Activated naive CD8-positive, alpha-beta T cell treated with anti-CD3 and anti-CD28 coated beads, Interleukin-2, amount 10 ng/mL, durations not matched to agents 7 days and 5 days (primary cell): ENCODE measurements at regions of chr12 and their contacts with region 1.

Region 1: DNA sequence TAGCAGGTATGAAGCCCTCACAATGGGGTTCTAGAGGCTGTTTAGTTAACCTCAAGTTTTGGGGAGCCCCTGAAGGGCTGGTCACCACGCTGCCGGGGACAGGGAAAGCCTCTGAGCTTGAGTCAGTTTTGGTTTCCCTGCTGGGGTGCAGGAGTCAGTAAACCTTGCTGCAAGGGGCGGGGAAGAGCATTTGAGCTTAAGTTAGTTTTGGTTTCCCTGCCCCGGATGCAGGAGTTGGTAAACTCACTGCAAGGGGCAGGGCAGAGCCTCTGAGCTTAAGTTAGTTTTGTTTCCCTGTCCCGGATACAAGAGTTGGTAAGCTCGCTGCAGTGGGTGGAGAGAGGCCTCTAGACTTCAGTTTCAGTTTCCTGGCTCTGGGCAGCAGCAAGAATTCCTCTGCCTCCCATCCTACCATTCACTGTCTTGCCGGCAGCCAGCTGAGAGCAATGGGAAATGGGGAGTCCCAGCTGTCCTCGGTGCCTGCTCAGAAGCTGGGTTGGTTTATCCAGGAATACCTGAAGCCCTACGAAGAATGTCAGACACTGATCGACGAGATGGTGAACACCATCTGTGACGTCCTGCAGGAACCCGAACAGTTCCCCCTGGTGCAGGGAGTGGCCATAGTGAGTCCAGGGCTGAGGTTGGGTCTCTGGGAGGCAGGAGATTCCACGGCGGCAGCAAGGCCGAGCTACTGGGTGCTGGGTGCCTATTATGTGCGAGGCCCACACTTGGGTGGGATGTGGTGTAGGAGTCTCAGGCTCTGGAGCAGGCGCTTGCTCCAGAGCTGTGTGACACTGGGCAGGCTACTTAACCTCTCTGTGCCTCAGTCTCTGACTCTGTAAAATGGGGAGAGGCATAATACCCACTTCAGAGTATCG is at the start of gene OAS2:
- DNase-seq: peak; percentile 74
- ATAC-seq: peak; percentile 94
- H3K4me3 Mint-ChIP-seq: peak within 1 kb of the TSS; percentile 88
- H3K27ac Mint-ChIP-seq: peak within 1 kb of the TSS; percentile 100
- H3K4me1 Mint-ChIP-seq: peaks cover 41% of the 10 kb centered on the region
- H3K27me3 Mint-ChIP-seq: no peaks in the 10 kb centered on the region
- total RNA-seq, gene OAS2: 244 to 245 TPM

Region 2: GRCh38 chr12:112900299-112901145 is 77.9 kb before region 1 on chr12:
- POLR2A ChIA-PET with region 1: interaction called, 187 read pairs
- DNase-seq: no peak
- ATAC-seq: peak; percentile 35
- H3K4me3 Mint-ChIP-seq: no peak overlapping the region
- H3K27ac Mint-ChIP-seq: peak overlapping the region; percentile 67
- H3K4me1 Mint-ChIP-seq: peaks cover 23% of the 10 kb centered on the region
- H3K27me3 Mint-ChIP-seq: peaks cover 19% of the 10 kb centered on the region

Region 3: DNA sequence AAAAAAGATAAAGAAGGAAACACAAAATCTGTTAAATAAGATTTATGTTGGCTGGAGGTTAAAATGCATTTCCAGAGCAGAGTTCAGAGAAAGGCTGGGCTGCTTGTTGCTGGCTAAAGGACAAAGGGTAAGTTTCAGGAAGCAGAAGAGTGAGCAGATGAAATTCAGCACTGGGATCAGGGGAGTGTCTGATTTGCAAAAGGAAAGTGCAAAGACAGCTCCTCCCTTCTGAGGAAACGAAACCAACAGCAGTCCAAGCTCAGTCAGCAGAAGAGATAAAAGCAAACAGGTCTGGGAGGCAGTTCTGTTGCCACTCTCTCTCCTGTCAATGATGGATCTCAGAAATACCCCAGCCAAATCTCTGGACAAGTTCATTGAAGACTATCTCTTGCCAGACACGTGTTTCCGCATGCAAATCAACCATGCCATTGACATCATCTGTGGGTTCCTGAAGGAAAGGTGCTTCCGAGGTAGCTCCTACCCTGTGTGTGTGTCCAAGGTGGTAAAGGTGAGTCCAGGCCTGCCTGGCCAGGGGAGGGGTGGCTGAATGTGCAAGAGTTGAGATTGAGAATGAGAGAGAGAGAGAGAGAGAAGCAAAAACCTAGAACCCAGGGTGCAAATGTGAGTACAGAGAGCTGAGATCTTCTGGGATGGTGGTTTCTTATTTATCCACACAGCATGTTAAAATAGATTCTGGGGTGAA is 71.5 kb before region 1 on chr12 and contains the start of gene OAS1:
- POLR2A ChIA-PET with region 1: interaction called, 187 read pairs
- DNase-seq: peak; percentile 46
- ATAC-seq: peak; percentile 88
- H3K4me3 Mint-ChIP-seq: peak within 1 kb of the TSS; percentile 98
- H3K27ac Mint-ChIP-seq: peak within 1 kb of the TSS; percentile 99
- H3K4me1 Mint-ChIP-seq: peaks cover 56% of the 10 kb centered on the region
- H3K27me3 Mint-ChIP-seq: no peaks in the 10 kb centered on the region
- total RNA-seq, gene OAS1: 138 to 141 TPM

Region 4: DNA sequence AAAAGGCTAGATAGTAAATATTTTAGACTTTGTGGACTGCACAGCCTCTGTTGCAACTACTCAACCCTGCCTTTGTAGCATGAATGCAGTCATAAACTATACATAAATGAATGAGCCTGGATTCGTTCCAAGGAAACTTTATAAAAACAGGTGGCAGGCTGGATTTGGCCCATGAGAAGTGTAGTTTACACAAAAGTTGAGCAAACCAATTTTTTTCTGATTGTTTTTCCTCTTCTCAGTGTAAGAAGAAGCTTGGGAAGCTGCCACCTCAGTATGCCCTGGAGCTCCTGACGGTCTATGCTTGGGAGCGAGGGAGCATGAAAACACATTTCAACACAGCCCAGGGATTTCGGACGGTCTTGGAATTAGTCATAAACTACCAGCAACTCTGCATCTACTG is 62.1 kb before region 1 on chr12:
- POLR2A ChIA-PET with region 1: interaction called, 13 read pairs
- DNase-seq: no peak
- ATAC-seq: no peak
- H3K4me3 Mint-ChIP-seq: no peak overlapping the region
- H3K27ac Mint-ChIP-seq: no peak overlapping the region
- H3K4me1 Mint-ChIP-seq: peaks cover 30% of the 10 kb centered on the region
- H3K27me3 Mint-ChIP-seq: no peaks in the 10 kb centered on the region

Region 5: DNA sequence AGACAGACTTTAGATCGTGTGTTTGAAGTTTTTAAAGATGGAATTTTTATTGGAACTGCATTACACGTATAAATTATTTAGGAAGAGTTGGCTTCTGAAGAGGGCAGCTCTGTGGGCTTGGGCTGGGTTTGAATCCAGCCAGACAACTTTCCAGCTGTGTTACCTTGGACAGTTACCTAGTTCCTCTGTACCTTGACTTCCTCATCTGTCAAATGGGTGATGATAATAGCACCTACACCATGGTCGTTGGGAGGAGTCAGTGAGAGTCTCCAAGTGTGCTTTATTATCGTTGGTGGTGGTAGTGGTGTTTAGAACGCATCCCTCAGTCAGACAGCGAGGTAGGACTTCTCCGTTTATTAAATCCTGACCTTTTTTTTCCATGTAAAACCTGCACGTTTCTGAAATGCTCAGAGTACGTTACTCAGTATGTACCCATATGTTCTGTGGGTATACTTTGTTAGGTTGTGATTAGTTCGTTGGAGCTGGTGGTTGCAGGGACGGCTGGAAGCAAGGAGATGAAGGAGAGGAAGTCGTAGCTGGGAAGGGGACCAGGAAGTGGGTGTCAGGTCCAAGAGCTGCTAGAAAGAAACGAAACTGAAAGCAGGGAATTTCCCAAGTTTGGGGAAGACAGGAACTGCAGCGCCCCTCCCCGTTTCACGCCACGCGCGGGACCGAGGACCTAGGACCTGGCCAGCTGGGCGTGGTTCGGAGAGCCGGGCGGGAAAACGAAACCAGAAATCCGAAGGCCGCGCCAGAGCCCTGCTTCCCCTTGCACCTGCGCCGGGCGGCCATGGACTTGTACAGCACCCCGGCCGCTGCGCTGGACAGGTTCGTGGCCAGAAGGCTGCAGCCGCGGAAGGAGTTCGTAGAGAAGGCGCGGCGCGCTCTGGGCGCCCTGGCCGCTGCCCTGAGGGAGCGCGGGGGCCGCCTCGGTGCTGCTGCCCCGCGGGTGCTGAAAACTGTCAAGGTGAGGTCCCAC is 40.4 kb before region 1 on chr12 and contains the start of gene OAS3:
- POLR2A ChIA-PET with region 1: interaction called, 98 read pairs
- DNase-seq: peak; percentile 79
- ATAC-seq: peak; percentile 81
- H3K4me3 Mint-ChIP-seq: peak within 1 kb of the TSS; percentile 85
- H3K27ac Mint-ChIP-seq: peak within 1 kb of the TSS; percentile 95
- H3K4me1 Mint-ChIP-seq: peaks cover 43% of the 10 kb centered on the region
- H3K27me3 Mint-ChIP-seq: no peaks in the 10 kb centered on the region
- total RNA-seq, gene OAS3: 221 to 222 TPM

Region 6: GRCh38 chr12:112963227-112963867 is 15.1 kb before region 1 on chr12:
- POLR2A ChIA-PET with region 1: interaction called, 45 read pairs
- DNase-seq: no peak
- ATAC-seq: no peak
- H3K4me3 Mint-ChIP-seq: no peak overlapping the region
- H3K27ac Mint-ChIP-seq: no peak overlapping the region
- H3K4me1 Mint-ChIP-seq: peaks cover 20% of the 10 kb centered on the region
- H3K27me3 Mint-ChIP-seq: no peaks in the 10 kb centered on the region

Region 7: GRCh38 chr12:112992541-112993398 is 14.4 kb after region 1 on chr12:
- POLR2A ChIA-PET with region 1: interaction called, 114 read pairs
- DNase-seq: peak; percentile 67
- ATAC-seq: peak; percentile 34
- H3K4me3 Mint-ChIP-seq: no peak overlapping the region
- H3K27ac Mint-ChIP-seq: peak overlapping the region; percentile 28
- H3K4me1 Mint-ChIP-seq: peaks cover 43% of the 10 kb centered on the region
- H3K27me3 Mint-ChIP-seq: no peaks in the 10 kb centered on the region

Region 8: DNA sequence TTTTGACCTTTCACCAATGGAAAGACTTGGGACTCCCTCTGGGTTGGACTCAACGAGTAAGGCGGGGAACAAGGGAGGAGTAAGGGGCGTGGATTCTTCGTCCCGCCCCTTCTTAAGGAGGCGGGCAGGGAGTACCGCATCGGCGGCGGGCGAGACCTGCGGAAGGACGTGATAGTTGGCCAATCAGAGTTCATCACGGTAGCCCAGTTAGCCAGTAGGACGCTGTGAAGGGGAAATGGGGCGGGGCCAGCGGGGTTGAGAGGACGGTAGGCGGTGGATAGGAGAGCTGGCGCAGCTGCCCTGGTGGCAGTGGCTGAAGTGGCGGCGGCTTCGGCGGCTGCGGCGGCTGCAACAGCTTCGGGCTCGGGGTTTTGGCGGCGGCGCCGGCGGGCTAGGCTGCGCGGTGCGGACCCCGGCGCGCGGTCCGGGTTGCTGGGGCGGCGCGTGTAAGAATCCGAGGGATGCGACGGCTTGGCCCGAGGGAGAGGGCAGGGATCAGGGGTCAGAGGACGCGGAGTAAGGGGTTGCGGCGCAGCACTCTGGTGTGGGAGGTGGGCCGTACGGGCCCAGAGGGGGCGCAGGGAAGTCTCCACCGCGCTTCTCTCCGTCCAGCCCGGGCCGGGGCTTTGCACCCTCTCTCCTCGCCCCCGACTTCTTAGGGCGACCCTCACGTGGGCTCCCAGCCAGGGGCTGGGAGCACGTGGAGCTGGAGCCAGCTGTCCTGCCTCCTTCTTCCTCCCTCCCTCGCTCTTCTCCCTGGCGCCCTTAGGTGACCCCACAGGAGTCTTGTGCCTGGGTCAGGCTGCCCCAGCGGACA is 243.0 kb after region 1 on chr12 and contains the start of gene TPCN1:
- POLR2A ChIA-PET with region 1: no interaction called
- DNase-seq: peak; percentile 97
- ATAC-seq: peak; percentile 96
- H3K4me3 Mint-ChIP-seq: peak within 1 kb of the TSS; percentile 93
- H3K27ac Mint-ChIP-seq: peak within 1 kb of the TSS; percentile 96
- H3K4me1 Mint-ChIP-seq: peaks cover 34% of the 10 kb centered on the region
- H3K27me3 Mint-ChIP-seq: peaks cover 6% of the 10 kb centered on the region
- total RNA-seq, gene TPCN1: 29.9 to 32.0 TPM